Right ventricle myocardium superior (tissue), 1 donor: ENCODE measurements at regions of chr2 and their contacts with region 1.

Region 1: GRCh38 chr2:160406591-160407392 is 86.8 kb downstream of the RBMS1 start:
- DNase-seq: peak; percentile 80
- ATAC-seq: peak; percentile 45

Region 2: GRCh38 chr2:160429248-160430000 is 22.6 kb after region 1 on chr2:
- intact Hi-C with region 1: no loop called
- DNase-seq: no peak
- ATAC-seq: peak; percentile 41

Region 3: DNA sequence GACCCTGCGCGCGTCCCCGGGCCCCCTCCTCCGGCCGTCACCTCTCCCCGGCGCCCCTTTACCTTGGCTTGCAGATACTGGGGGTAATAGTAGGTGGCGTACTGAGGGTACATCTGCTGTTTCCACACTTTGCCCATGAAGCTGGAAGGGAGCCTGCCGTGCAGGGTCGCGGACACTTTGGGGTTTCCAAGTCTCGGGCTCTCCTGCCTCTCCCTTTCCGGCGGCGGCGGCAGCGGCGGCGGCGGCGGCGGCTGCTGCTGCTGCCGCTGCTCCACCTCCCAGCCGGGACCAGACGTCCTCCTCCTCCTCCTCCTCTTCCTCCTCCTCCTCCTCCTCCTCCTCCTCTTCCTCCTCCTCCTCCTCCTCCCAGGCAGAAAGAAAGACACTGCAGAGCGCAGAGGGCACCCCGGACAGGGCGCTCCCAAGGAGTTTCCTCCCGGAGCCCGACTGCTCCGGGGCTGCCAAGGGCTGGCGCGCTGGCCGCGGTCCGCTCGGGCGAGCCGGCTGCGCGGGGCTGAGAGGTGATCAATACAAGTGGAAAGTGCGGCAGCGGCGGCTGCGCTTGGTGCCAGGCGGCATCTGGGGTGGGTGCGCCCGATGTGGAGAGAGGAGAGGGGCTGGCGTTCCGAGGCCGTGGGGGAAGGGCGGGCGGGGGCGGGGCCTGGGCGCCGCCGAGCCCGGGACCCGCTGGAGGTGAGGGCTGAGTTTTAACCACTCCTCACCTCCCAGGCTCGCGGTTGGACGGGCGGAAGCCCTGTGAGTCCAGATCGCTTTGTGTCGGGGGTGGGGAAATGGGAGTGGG is 86.6 kb after region 1 on chr2 and contains the start of gene RBMS1:
- intact Hi-C with region 1: loop called (anchors 5 kb)
- DNase-seq: peak; percentile 79
- ATAC-seq: peak; percentile 76
- total RNA-seq, gene RBMS1: 53.0 TPM